IMR-90 (cell line): ENCODE measurements at regions of chr20 and their contacts with region 1.

Region 1: GRCh38 chr20:62010551-62011402 is 54.9 kb downstream of the TAF4 start:
- DNase-seq: peak; percentile 55
- ATAC-seq: peak; percentile 91
- H3K4me3 ChIP-seq: no peak overlapping the region
- H3K27ac ChIP-seq: no peak overlapping the region
- H3K4me1 ChIP-seq: peaks cover 2% of the 10 kb centered on the region; the same call in 1 of the 2 replicates
- H3K27me3 ChIP-seq: no peaks in the 10 kb centered on the region
- CTCF ChIP-seq: peak; percentile 88
- POLR2A ChIP-seq: no peak
- RAD21 ChIP-seq: peak; percentile 94

Region 2: GRCh38 chr20:62121776-62122631 is 111.2 kb after region 1 on chr20 and contains the start of gene LSM14B:
- CTCF ChIA-PET with region 1: no interaction called
- POLR2A ChIA-PET with region 1: no interaction called
- dilution Hi-C with region 1: no loop called
- in situ Hi-C with region 1: no loop called
- intact Hi-C with region 1: loop called (anchors 1 kb)
- DNase-seq: peak; percentile 95
- ATAC-seq: peak; percentile 94
- H3K4me3 ChIP-seq: peak within 1 kb of the TSS; percentile 100
- H3K27ac ChIP-seq: peak within 1 kb of the TSS; percentile 82
- H3K4me1 ChIP-seq: peaks cover 11% of the 10 kb centered on the region
- H3K27me3 ChIP-seq: peaks cover 21% of the 10 kb centered on the region
- CTCF ChIP-seq: 0 out of 2 replicates have a peak, but pooled peaks have one; percentile 1
- POLR2A ChIP-seq: no peak
- RAD21 ChIP-seq: no peak
- total RNA-seq, gene LSM14B: 23.7 and 30.6 TPM in 2 replicates

Region 3: GRCh38 chr20:62136283-62137091 is 125.7 kb after region 1 on chr20:
- CTCF ChIA-PET with region 1: interaction called, 8 read pairs
- POLR2A ChIA-PET with region 1: no interaction called
- dilution Hi-C with region 1: no loop called
- in situ Hi-C with region 1: no loop called
- intact Hi-C with region 1: loop called (anchors 1 kb)
- DNase-seq: peak; percentile 68
- ATAC-seq: peak; percentile 53
- H3K4me3 ChIP-seq: no peak overlapping the region
- H3K27ac ChIP-seq: no peak overlapping the region
- H3K4me1 ChIP-seq: peaks cover 10% of the 10 kb centered on the region; the same call in 1 of the 2 replicates
- H3K27me3 ChIP-seq: no peaks in the 10 kb centered on the region
- CTCF ChIP-seq: peak; percentile 76
- POLR2A ChIP-seq: no peak
- RAD21 ChIP-seq: peak; percentile 72

Region 4: GRCh38 chr20:62141558-62142244 is 130.9 kb after region 1 on chr20:
- CTCF ChIA-PET with region 1: interaction called, 8 read pairs
- POLR2A ChIA-PET with region 1: no interaction called
- dilution Hi-C with region 1: no loop called
- in situ Hi-C with region 1: no loop called
- intact Hi-C with region 1: loop called (anchors 1 kb)
- DNase-seq: peak; percentile 38
- ATAC-seq: no peak
- H3K4me3 ChIP-seq: peak overlapping the region; percentile 95
- H3K27ac ChIP-seq: peak overlapping the region; percentile 55
- H3K4me1 ChIP-seq: peaks cover 15% of the 10 kb centered on the region
- H3K27me3 ChIP-seq: no peaks in the 10 kb centered on the region
- CTCF ChIP-seq: peak; percentile 38
- POLR2A ChIP-seq: no peak
- RAD21 ChIP-seq: peak; percentile 23; the same call in 1 of the 2 replicates

Region 5: GRCh38 chr20:62258499-62259293 is 247.9 kb after region 1 on chr20:
- CTCF ChIA-PET with region 1: no interaction called
- POLR2A ChIA-PET with region 1: no interaction called
- dilution Hi-C with region 1: no loop called
- in situ Hi-C with region 1: no loop called
- intact Hi-C with region 1: loop called (anchors 5 kb)
- DNase-seq: peak; percentile 85
- ATAC-seq: peak; percentile 99
- H3K4me3 ChIP-seq: no peak overlapping the region
- H3K27ac ChIP-seq: no peak overlapping the region
- H3K4me1 ChIP-seq: peaks cover 8% of the 10 kb centered on the region; the same call in 1 of the 2 replicates
- H3K27me3 ChIP-seq: no peaks in the 10 kb centered on the region
- CTCF ChIP-seq: no peak
- POLR2A ChIP-seq: no peak
- RAD21 ChIP-seq: no peak

Region 6: DNA sequence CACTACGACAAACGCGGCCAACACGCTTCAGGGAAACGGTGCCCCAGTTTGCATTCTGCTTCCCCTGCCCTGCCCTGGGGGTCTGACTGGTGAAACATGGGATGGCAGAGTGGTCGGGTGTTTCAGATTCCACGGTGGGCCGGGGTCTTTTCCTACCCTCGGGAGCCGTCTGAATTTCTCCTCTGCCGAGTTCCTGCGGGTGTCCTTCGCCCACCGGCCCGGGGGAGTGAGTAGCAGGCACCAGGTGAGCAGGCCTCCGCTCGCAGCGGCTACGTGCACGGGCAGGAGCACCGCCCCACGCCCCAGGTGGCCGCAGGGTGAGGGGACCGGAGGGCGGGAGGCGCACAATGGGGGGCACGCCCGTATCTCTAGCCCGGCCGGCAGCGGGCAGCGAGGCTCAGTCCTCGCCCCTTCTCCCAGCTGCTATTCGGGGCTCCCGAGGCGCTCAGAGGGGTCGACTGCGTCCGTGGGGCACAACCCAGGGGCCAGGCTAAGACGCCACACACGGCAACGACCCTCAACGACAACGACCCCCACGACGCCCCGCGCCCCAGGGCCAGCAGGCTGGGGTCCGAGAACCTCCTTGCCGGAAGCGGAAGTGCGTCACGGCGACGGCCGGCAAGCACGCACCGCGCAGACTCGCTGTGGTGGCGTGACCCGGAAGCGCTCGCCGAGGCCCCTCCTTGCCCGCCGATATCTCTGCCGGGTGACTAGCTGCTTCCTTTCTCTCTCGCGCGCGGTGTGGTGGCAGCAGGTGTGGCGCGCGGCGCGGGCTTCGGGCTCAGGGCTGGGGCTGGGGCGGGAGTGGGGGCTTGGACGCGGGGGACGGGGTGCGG is 375.8 kb after region 1 on chr20 and contains the start of gene RPS21:
- CTCF ChIA-PET with region 1: no interaction called
- POLR2A ChIA-PET with region 1: no interaction called
- dilution Hi-C with region 1: no loop called
- in situ Hi-C with region 1: loop called (anchors 25 kb)
- intact Hi-C with region 1: loop called (anchors 10 kb)
- DNase-seq: peak; percentile 89
- ATAC-seq: peak; percentile 79
- H3K4me3 ChIP-seq: peak within 1 kb of the TSS; percentile 92
- H3K27ac ChIP-seq: peak within 1 kb of the TSS; percentile 96
- H3K4me1 ChIP-seq: peaks cover 5% of the 10 kb centered on the region
- H3K27me3 ChIP-seq: no peaks in the 10 kb centered on the region
- CTCF ChIP-seq: no peak
- POLR2A ChIP-seq: peak; percentile 84
- RAD21 ChIP-seq: no peak
- total RNA-seq, gene RPS21: 2,710 and 3,846 TPM in 2 replicates